ENCODE measurements at regions of chr4 and their contacts with region 1.

Region 1: GRCh38 chr4:53929955-53930798 is 134.2 kb downstream of the CHIC2 start:
- DNase-seq: peak; percentile 68
- ATAC-seq: peak; percentile 99
- H3K4me3 ChIP-seq: no peak overlapping the region
- H3K27ac ChIP-seq: no peak overlapping the region
- H3K4me1 ChIP-seq: peaks cover 0 to 6% of the 10 kb centered on the region in 2 experiments; a peak in 1 of 4 replicates
- H3K27me3 ChIP-seq: no peaks in the 10 kb centered on the region
- CTCF ChIP-seq: peak; percentile 75 to 87 (median 77); a peak in 5 of 6 replicates
- POLR2A ChIP-seq: no peak
- RAD21 ChIP-seq: peak; percentile 91

Region 2: DNA sequence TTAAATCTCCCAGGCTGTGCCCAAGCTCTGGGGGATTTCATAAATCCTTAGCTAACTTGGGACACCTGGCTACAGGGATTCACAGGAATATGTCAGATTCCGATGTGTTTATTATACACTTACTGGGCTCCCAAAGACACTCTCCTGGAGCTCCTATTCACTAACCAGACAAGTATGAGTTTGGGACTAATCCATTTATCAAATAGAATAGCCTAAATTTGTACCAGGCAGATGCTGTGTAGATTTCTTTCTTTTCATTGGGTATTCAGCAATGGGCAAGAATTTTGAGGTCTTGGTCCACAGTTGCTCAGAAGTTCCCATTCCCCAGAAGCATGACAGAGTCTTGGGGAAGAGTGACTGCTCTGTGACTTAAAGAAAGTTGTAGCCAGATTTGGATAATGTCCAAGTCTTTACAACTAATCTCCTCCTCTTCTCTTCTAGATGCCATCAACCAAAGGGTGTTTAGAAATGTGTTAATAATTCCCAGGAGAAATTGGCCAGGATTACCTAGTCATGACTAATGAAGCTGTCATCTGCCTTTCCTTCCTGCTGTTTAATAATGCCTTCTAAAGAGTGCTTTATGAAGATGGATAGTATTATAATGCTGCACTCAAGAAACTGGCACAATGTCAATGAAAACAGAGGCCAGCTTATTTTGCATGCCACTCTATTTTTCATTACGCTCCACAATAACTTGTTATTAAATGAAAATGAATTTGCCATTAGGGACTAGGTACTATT is 13.3 kb after region 1 on chr4:
- CTCF ChIA-PET with region 1: interaction called, 16 read pairs
- POLR2A ChIA-PET with region 1: no interaction called
- RAD21 ChIA-PET with region 1: no interaction called
- intact Hi-C with region 1: no loop called
- DNase-seq: peak; percentile 85
- ATAC-seq: peak; percentile 87
- H3K4me3 ChIP-seq: no peak overlapping the region
- H3K27ac ChIP-seq: no peak overlapping the region; the same call in 1 of the 2 replicates
- H3K4me1 ChIP-seq: peaks cover 16 to 24% of the 10 kb centered on the region in 2 experiments
- H3K27me3 ChIP-seq: 0 out of 2 replicates have a peak, but pooled peaks cover 4% of the 10 kb centered on the region
- CTCF ChIP-seq: no peak
- POLR2A ChIP-seq: no peak
- RAD21 ChIP-seq: 0 out of 2 replicates have a peak, but pooled peaks have one; percentile 22

Region 3: DNA sequence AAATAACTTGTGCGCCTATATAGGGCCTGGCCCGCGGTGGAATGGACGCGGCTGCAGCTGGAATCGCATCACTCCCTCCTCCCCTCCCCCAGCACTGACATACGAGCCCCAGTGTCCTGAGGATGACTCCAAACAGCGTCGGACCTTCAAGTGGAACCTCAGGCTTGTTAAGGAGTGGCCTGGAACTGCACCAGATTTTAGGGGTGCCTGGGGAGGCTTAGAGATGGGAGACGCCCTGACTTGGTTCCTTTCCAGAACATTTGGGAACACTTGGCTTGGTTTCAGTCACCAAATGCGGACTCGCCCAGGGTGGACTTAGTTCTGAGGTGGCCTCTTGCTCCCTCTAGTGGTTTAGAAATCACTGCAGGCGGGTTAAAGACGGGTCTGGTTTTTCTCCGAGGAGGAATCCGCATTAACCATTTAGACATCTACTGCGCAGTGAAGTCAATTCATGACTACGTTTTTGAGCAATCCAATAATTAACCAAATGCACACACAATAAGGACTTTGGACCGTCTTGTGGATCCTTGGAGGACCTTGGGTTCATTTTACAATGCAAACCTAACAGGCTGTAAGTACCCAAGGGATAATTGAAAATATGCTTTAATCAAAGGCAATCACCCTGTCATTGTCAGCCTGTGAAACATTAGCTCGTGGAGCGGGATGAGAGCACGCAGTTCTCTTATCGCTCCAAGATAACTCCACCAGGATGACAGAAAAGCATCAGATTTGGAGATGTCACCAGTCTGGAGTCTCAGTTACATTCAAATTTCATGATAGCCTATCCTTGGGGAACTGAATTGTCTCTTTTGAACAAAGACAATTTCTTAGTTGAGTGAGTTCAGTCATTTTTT is 287.7 kb after region 1 on chr4:
- CTCF ChIA-PET with region 1: interaction called, 64 read pairs
- POLR2A ChIA-PET with region 1: interaction called, 6 read pairs
- RAD21 ChIA-PET with region 1: interaction called, 6 read pairs
- intact Hi-C with region 1: loop called (anchors 1 kb)
- DNase-seq: peak; percentile 71
- ATAC-seq: peak; percentile 97
- H3K4me3 ChIP-seq: peak overlapping the region; percentile 50 to 54
- H3K27ac ChIP-seq: no peak overlapping the region; the same call in 1 of the 2 replicates
- H3K4me1 ChIP-seq: peaks cover 0 to 12% of the 10 kb centered on the region in 2 experiments; a peak in 2 of 4 replicates
- H3K27me3 ChIP-seq: no peaks in the 10 kb centered on the region
- CTCF ChIP-seq: peak; percentile 85 to 91 (median 88)
- POLR2A ChIP-seq: no peak
- RAD21 ChIP-seq: peak; percentile 96

Region 4: DNA sequence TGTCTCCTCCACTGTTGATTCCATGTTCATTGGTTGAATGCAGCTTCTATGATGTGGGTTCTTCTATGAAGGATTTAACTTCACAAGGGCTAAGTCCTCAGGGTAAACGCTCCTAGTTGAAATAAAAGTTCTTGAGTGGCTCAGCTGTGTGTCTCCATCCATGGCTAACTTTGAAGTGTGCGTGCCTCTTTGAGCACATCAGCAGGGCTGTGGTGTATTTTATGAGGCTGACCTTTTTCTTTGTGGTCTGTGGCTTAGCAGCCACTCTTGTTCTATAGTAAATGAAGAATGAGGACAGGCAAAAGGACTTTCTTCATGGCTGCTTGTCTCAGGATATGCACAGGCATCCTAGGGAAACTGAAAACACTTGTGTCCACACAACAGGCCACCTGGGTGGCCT is 816.0 kb after region 1 on chr4:
- CTCF ChIA-PET with region 1: no interaction called
- POLR2A ChIA-PET with region 1: no interaction called
- RAD21 ChIA-PET with region 1: no interaction called
- intact Hi-C with region 1: no loop called
- DNase-seq: no peak
- ATAC-seq: no peak
- H3K4me3 ChIP-seq: no peak overlapping the region
- H3K27ac ChIP-seq: no peak overlapping the region
- H3K4me1 ChIP-seq: no peaks in the 10 kb centered on the region
- H3K27me3 ChIP-seq: peaks cover 8% of the 10 kb centered on the region
- CTCF ChIP-seq: no peak
- POLR2A ChIP-seq: no peak
- RAD21 ChIP-seq: no peak

Measured in HCT116 (cell line).